Dorsolateral prefrontal cortex (tissue), 120 donors: ENCODE measurements at regions of chr19 and their contacts with region 1.

Region 1: GRCh38 chr19:2274931-2275535 is 6.9 kb downstream of the PEAK3 start:
- DNase-seq: peak; percentile 62 to 87 (median 80)
- H3K4me3 ChIP-seq: peak overlapping the region in 10 of 59 donors; percentile 4 to 37 (median 14)
- H3K27ac ChIP-seq: peak overlapping the region in 44 of 59 donors; percentile 5 to 78 (median 57)
- H3K27me3 ChIP-seq: no peaks in the 10 kb centered on the region
- CTCF ChIP-seq: peak; percentile 32 to 85 (median 74)

Region 2: GRCh38 chr19:2213799-2214198 is 61.2 kb before region 1 on chr19:
- intact Hi-C with region 1: no loop called
- DNase-seq: peak in 2 of 10 donors; percentile 20 to 49
- H3K4me3 ChIP-seq: no peak overlapping the region
- H3K27ac ChIP-seq: peak overlapping the region in 50 of 59 donors; percentile 2 to 84 (median 60)
- H3K27me3 ChIP-seq: no peaks in the 10 kb centered on the region
- CTCF ChIP-seq: peak in 1 of 56 donors; percentile 9

Region 3: DNA sequence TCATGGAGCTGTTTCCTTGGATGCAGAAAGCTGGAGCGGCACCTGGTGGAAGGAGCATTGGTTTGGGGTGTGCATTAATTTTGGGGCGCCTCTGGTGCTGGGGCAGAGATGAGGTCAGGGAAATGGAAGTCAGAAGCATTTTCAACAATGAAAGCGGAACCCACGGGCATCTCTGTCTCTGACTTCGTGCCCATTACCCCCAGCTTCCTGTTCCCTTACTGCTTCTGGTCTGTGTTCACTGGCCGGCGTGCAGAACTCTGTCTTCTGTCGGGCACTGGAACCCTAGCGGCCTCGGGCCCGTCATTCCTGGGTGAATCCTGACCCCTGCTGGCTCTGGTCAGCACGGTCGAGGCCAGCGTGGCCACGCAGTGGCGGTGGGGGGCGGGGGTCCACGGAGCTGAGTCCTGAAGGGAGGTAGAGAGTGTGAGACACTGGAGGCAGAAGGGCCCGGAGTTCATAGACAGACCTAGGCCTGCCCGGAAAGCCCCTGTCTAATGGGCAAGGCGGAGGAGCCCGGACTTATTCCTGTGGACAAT is 40.9 kb after region 1 on chr19:
- intact Hi-C with region 1: loop called (anchors 5 kb)
- DNase-seq: peak in 8 of 10 donors; percentile 61 to 81 (median 74)
- H3K4me3 ChIP-seq: no peak overlapping the region
- H3K27ac ChIP-seq: peak overlapping the region in 18 of 59 donors; percentile 8 to 60 (median 30)
- H3K27me3 ChIP-seq: peaks cover 0 to 10% (median 0%) of the 10 kb centered on the region in 45 donors
- CTCF ChIP-seq: peak; percentile 29 to 88 (median 76)

Region 4: DNA sequence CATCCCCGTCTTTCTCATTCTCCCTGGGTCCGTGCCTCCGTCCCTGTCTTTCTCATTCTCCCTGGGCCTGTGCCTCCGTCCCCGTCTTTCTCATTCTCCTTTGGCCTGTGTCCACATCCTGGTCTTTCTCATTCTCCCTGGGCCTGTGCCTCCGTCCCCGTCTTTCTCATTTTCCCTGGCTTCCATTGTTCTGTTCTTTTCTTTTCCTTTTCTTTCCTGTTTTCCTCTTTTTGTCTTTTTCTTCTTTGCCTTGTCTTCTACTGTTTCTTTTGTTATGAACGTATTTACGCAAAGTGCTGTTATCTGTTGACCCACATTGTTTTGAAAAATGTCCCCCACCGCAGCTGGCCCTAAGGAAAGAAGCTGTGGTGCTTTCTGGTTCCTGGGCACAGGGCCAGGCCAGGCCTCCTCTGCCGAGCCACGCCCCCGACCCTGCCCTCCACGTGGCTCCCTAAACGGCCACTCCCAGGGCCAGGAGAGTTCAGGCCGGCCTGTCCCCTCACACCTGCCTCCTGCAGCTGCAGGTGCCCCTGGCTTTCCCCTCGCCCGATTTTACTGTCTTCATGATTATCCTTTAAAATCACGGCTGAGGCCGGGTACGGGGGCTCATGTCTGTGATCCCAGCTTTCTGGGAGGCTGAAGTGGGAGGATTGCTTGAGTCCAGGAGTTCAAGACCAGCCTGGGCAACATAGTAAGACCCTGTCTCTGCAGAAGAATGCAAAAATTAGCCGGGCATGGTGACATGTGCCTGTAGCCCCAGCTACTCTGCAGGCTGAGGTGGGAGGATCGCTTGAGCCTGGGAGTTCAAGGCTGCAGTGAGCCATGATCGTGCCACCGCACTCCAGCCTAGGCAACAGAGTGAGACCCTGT is 71.0 kb after region 1 on chr19:
- intact Hi-C with region 1: no loop called
- DNase-seq: peak in 1 of 10 donors; percentile 45
- H3K4me3 ChIP-seq: no peak overlapping the region
- H3K27ac ChIP-seq: peak overlapping the region in 32 of 59 donors; percentile 3 to 67 (median 40)
- H3K27me3 ChIP-seq: no peaks in the 10 kb centered on the region
- CTCF ChIP-seq: no peak

Region 5: GRCh38 chr19:2391118-2391725 is 116.2 kb after region 1 on chr19:
- intact Hi-C with region 1: loop called (anchors 2 to 5 kb)
- DNase-seq: peak in 4 of 10 donors; percentile 13 to 52 (median 38)
- H3K4me3 ChIP-seq: no peak overlapping the region
- H3K27ac ChIP-seq: no peak overlapping the region
- H3K27me3 ChIP-seq: peaks cover 0 to 9% (median 0%) of the 10 kb centered on the region in 45 donors
- CTCF ChIP-seq: peak; percentile 61 to 91 (median 81)